Esophagus muscularis mucosa (tissue), 4 donors: ENCODE measurements at regions of chr12 and their contacts with region 1.

Region 1: GRCh38 chr12:39764944-39765560 is 145.4 kb upstream of the ABCD2 start:
- DNase-seq: no peak
- H3K4me3 ChIP-seq: no peak overlapping the region
- H3K27ac ChIP-seq: no peak overlapping the region
- H3K4me1 ChIP-seq: no peaks in the 10 kb centered on the region
- H3K27me3 ChIP-seq: no peaks in the 10 kb centered on the region
- CTCF ChIP-seq: peak; percentile 59 to 77 (median 62)
- EP300 ChIP-seq: no peak
- POLR2A ChIP-seq: no peak

Region 2: DNA sequence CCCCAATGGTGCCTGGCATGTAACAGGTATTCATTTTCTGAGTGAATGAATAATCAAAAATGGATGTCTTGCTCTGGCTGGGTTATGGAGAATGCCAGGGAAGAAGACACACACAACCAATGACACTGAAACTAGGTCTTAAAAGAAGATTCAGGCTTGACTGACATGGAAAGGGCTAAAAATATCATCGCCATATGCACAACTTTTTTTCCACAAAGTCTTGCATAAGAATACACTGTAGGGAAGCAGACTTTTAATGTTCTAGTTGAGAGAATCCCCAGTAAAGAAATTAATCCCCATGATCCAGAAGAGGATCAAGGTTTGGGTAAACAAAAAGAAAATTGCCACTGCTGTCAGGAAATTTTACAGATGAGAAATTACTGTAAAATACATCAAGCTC is 224.4 kb after region 1 on chr12:
- intact Hi-C with region 1: loop called (anchors 2 kb)
- DNase-seq: no peak
- H3K4me3 ChIP-seq: no peak overlapping the region
- H3K27ac ChIP-seq: no peak overlapping the region
- H3K4me1 ChIP-seq: peaks cover 0 to 15% (median 8%) of the 10 kb centered on the region in 4 donors
- H3K27me3 ChIP-seq: no peaks in the 10 kb centered on the region
- CTCF ChIP-seq: no peak
- EP300 ChIP-seq: no peak
- POLR2A ChIP-seq: no peak